PC-9 (cell line): ENCODE measurements at regions of chr1 and their contacts with region 1.

Region 1: GRCh38 chr1:180502360-180503273 is at the start of gene ACBD6:
- DNase-seq: peak; percentile 71 to 85
- H3K4me3 ChIP-seq: peak within 1 kb of the TSS; percentile 94
- H3K27ac ChIP-seq: peak within 1 kb of the TSS; percentile 88
- H3K4me1 ChIP-seq: peaks cover 27% of the 10 kb centered on the region
- H3K27me3 ChIP-seq: no peaks in the 10 kb centered on the region
- CTCF ChIP-seq: 0 out of 2 replicates have a peak, but pooled peaks have one; percentile 16
- total RNA-seq, gene ACBD6: 52.2 and 61.0 TPM in 2 replicates

Region 2: DNA sequence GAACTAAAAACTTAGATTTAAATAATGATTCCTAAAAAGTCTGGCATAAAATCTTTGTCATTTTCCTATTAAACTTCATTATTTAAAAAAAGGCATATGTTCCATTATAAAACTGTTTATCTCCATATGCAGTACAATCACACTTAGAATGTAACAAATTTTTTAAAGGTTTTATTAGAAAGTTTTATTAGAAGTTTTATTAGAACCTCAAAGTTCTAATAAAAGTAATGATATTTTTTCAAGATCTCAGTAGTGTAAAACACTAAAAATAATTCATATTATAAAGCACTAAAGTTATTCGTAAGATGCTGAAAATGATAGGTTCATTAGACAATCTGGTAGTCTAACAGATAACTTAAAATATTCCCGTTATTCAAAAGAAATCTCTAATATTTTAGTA is 43.8 kb before region 1 on chr1:
- CTCF ChIA-PET with region 1: no interaction called
- POLR2A ChIA-PET with region 1: interaction called, 11 read pairs
- intact Hi-C with region 1: no loop called
- DNase-seq: no peak
- H3K4me3 ChIP-seq: no peak overlapping the region
- H3K27ac ChIP-seq: no peak overlapping the region
- H3K4me1 ChIP-seq: no peaks in the 10 kb centered on the region
- H3K27me3 ChIP-seq: no peaks in the 10 kb centered on the region
- CTCF ChIP-seq: no peak

Region 3: GRCh38 chr1:180482425-180483275 is 20.0 kb before region 1 on chr1:
- CTCF ChIA-PET with region 1: interaction called, 18 read pairs
- POLR2A ChIA-PET with region 1: interaction called, 3 read pairs
- intact Hi-C with region 1: no loop called
- DNase-seq: peak in 1 of 2 experiments; percentile 45
- H3K4me3 ChIP-seq: no peak overlapping the region
- H3K27ac ChIP-seq: no peak overlapping the region
- H3K4me1 ChIP-seq: no peaks in the 10 kb centered on the region
- H3K27me3 ChIP-seq: no peaks in the 10 kb centered on the region
- CTCF ChIP-seq: peak; percentile 83

Region 4: DNA sequence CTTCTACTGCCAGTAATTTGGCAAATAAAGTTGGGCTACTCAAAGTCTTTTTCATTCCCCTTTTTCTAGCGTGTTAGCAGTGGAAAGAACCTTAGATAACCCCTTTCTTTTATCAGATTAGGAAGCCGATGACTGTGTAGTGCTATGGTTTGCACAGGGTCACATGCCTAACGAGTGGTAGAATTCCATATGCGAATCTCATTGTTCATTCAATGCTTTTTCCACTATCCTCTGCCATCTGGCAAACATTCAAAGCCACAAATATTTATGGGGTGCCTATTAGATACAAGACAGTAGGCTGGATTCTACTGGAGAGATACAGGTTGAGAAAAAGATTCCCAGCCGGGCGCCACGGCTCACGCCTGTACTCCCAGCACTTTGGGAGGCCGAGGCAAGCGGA is 571.0 kb after region 1 on chr1:
- CTCF ChIA-PET with region 1: no interaction called
- POLR2A ChIA-PET with region 1: no interaction called
- intact Hi-C with region 1: loop called (anchors 5 kb)
- DNase-seq: peak; percentile 66 to 93
- H3K4me3 ChIP-seq: no peak overlapping the region
- H3K27ac ChIP-seq: no peak overlapping the region
- H3K4me1 ChIP-seq: peaks cover 32% of the 10 kb centered on the region
- H3K27me3 ChIP-seq: no peaks in the 10 kb centered on the region
- CTCF ChIP-seq: no peak

Region 5: DNA sequence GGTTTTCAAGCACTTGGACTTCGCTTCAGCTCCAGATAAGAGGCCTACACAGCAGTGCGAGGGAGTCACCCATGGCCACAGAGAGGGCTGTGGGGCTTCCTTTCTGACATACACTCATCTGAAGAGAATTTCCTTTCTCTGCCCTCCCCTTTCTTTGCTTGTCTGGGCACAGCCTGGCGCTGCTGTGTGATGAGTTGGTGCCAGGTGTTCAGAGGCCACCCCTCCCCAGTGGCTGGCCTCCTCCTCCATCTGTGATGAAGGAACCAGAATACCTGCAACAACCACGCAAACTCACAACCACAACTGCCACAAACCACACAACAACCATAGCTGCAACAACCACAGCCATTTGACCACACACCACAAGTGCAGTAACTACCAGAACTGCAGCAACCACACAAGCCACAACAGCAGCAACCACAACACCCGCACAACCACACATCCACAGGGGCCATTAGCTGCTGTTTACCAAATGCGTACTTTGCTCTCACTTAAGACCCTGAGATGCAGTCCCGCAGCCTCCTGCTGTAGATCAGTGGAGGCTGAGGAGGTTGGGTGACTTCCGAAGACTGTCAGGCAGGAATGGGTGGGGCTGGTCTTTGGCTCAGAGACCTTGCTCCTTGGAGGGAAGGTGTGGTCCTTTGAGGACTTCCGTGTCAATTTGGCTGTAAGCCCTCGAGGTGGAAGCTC is 657.0 kb after region 1 on chr1:
- CTCF ChIA-PET with region 1: no interaction called
- POLR2A ChIA-PET with region 1: no interaction called
- intact Hi-C with region 1: loop called (anchors 5 kb)
- DNase-seq: peak; percentile 59 to 66
- H3K4me3 ChIP-seq: no peak overlapping the region
- H3K27ac ChIP-seq: no peak overlapping the region
- H3K4me1 ChIP-seq: peaks cover 11% of the 10 kb centered on the region; the same call in 1 of the 2 replicates
- H3K27me3 ChIP-seq: no peaks in the 10 kb centered on the region
- CTCF ChIP-seq: no peak